Aorta (tissue), 5 donors: ENCODE measurements at regions of chr10 and their contacts with region 1.

Region 1: DNA sequence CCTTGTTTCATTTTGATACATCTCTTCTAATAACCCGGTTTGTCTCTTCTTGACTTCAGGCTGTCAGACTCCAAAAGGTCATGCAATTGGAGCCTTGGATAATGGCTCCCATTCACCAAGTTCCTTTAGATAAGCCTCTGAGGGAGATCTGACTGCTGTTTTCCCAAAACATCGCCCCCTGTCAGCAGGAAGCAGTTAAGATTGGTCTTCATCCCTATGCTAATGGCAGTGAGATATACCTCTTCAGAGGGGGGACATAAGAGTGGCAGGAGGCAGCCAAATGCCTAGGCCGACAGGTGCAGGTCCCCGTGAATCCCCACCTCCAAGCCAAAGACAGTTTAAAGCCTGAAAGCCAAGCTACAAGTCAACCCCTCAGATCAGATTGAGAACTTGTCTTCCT is 144.6 kb downstream of the WDR11 start:
- DNase-seq: no peak
- ATAC-seq: no peak
- H3K4me3 ChIP-seq: no peak overlapping the region
- H3K27ac ChIP-seq: no peak overlapping the region
- H3K4me1 ChIP-seq: no peaks in the 10 kb centered on the region
- H3K27me3 ChIP-seq: no peaks in the 10 kb centered on the region

Region 2: DNA sequence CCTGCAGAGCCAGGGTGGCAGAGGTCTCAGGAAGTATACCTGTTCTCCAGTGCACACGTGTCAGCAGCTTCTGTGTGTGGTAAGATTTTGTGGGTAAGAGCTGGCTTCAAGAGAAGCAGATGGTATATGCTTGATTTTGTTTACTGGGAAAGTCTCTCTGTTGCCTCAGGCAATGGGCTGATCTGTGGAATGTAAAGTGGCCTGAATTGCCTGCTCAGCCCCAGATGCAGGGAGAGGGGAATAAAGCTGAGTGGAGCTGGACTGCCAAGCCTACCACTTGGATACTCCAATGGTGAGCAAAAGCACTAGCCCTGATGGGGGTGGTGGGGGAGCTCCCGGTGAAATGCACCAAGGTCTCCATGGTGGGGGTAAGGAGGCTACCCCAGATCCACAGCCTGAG is 11.5 kb after region 1 on chr10:
- intact Hi-C with region 1: loop called in 1 of 2 experiments (anchors 1 kb)
- DNase-seq: no peak
- ATAC-seq: no peak
- H3K4me3 ChIP-seq: no peak overlapping the region
- H3K27ac ChIP-seq: no peak overlapping the region
- H3K4me1 ChIP-seq: no peaks in the 10 kb centered on the region
- H3K27me3 ChIP-seq: no peaks in the 10 kb centered on the region